HEK293 (cell line): ENCODE measurements at regions of chr6 and their contacts with region 1.

Region 1: GRCh38 chr6:106997390-106998158 is 23.0 kb upstream of the CD24 start:
- H3K4me3 ChIP-seq: no peak overlapping the region
- H3K27ac ChIP-seq: no peak overlapping the region
- H3K4me1 ChIP-seq: no peaks in the 10 kb centered on the region
- CTCF ChIP-seq: peak; percentile 41; the same call in 1 of the 2 replicates

Region 2: GRCh38 chr6:106591111-106591825 is 406.3 kb before region 1 on chr6:
- CTCF ChIA-PET with region 1: interaction called, 10 read pairs
- POLR2A ChIA-PET with region 1: no interaction called
- H3K4me3 ChIP-seq: no peak overlapping the region
- H3K27ac ChIP-seq: no peak overlapping the region
- H3K4me1 ChIP-seq: no peaks in the 10 kb centered on the region
- CTCF ChIP-seq: no peak

Region 3: DNA sequence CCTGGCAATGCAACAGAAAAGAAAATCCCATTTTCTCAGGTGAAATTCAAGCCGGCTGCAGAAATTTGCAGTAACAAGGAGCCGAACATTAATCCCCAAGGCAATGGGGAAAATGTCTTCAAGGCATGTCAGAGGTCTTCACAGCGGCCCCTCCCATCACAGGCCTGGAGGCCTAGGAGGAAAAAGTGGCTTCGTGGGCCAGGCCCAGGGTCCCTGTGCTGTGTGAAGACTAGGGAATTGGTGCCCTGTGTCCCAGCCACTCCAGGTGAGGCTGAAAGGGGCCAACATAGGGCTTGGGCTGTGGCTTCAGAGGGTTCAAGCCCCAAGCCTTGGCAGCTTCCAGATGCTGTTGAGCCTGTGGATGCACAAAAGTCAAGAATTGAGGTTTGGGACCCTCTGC is 134.7 kb before region 1 on chr6:
- CTCF ChIA-PET with region 1: no interaction called
- POLR2A ChIA-PET with region 1: no interaction called
- H3K4me3 ChIP-seq: no peak overlapping the region
- H3K27ac ChIP-seq: no peak overlapping the region
- H3K4me1 ChIP-seq: no peaks in the 10 kb centered on the region
- CTCF ChIP-seq: no peak

Region 4: DNA sequence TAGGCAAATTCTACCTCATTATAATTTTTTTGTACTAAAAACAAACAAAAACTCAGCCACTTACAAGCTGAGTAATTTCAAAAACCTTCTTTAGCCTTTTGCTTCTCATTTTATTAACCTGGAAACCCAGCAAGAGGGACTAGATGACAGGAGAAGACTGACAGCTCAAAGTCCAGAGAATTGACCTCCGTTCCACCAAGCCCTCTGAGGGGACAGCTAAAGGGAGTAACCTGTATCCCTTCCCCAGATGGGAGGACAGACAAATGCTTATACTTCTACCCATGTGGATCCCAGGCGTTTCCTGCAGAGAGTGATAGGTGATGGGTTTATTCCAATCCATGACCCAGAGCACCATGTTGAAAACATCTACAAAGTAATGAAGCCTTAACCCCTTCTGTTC is 11.9 kb after region 1 on chr6:
- CTCF ChIA-PET with region 1: interaction called, 50 read pairs
- POLR2A ChIA-PET with region 1: no interaction called
- H3K4me3 ChIP-seq: no peak overlapping the region
- H3K27ac ChIP-seq: no peak overlapping the region
- H3K4me1 ChIP-seq: no peaks in the 10 kb centered on the region
- CTCF ChIP-seq: no peak

Region 5: DNA sequence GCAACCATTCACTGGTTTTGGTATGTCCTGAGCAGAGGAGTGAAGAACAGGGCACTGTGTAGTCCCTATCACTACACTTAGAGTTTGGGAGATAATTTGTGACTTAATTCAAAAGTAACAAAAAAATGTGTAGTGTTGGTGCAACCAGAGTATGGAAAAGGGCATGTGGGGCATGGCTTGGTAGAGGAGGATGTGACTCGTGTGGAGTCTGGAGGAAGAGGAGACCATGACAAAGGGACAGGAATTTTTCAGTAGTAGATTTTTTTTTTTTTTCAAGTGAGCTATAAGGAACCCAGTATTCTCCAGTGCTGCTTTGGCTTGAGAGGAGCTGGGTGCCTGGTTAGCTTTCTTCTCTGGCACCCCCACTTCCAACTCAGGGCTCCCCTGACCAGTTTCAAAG is 35.6 kb after region 1 on chr6:
- CTCF ChIA-PET with region 1: interaction called, 12 read pairs
- POLR2A ChIA-PET with region 1: no interaction called
- H3K4me3 ChIP-seq: no peak overlapping the region
- H3K27ac ChIP-seq: no peak overlapping the region
- H3K4me1 ChIP-seq: no peaks in the 10 kb centered on the region
- CTCF ChIP-seq: no peak